ENCODE measurements at regions of chr21 and their contacts with region 1.

Region 1: DNA sequence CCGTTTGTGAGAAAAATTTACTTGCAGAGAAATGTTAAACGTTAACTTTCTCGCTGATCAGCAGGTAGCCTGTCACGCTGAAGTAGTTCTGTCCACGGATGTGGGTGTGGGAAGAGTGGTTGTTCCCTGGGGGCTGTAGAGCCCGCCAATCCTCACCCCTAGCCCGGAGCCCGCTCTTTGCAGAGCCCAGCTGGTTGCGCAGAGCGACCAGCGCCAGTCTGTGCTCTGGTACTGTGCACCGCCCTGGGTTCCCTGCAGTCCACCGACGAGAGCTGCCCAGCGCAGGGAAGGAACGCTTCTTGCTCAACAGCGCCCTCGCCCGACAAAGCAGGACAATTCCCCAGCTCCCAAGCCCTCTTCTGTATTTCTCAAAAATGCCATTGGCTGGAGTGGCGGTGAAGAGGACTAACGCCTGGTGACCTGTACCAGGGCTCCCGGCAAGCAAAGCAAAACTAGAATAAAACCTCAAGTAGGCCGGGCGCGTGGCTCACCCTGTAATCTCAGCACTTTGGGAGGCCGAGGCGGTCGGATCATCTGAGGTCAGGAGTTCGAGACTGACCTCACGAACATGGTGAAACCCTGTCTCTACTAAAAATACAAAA is 3.3 kb downstream of the RIPPLY3 start:
- DNase-seq: peak; percentile 65 to 73 (median 68)
- H3K4me3 ChIP-seq: no peak overlapping the region
- H3K4me3 Mint-ChIP-seq: peak overlapping the region; percentile 40 to 87 (median 64)
- H3K27ac ChIP-seq: no peak overlapping the region
- H3K27ac Mint-ChIP-seq: peak overlapping the region in 1 of 7 donors; percentile 35
- H3K4me1 ChIP-seq: peaks cover 17% of the 10 kb centered on the region
- H3K4me1 Mint-ChIP-seq: peaks cover 8 to 18% (median 12%) of the 10 kb centered on the region in 4 donors
- H3K27me3 ChIP-seq: no peaks in the 10 kb centered on the region
- H3K27me3 Mint-ChIP-seq: peaks cover 24 to 33% of the 10 kb centered on the region in 2 donors

Region 2: DNA sequence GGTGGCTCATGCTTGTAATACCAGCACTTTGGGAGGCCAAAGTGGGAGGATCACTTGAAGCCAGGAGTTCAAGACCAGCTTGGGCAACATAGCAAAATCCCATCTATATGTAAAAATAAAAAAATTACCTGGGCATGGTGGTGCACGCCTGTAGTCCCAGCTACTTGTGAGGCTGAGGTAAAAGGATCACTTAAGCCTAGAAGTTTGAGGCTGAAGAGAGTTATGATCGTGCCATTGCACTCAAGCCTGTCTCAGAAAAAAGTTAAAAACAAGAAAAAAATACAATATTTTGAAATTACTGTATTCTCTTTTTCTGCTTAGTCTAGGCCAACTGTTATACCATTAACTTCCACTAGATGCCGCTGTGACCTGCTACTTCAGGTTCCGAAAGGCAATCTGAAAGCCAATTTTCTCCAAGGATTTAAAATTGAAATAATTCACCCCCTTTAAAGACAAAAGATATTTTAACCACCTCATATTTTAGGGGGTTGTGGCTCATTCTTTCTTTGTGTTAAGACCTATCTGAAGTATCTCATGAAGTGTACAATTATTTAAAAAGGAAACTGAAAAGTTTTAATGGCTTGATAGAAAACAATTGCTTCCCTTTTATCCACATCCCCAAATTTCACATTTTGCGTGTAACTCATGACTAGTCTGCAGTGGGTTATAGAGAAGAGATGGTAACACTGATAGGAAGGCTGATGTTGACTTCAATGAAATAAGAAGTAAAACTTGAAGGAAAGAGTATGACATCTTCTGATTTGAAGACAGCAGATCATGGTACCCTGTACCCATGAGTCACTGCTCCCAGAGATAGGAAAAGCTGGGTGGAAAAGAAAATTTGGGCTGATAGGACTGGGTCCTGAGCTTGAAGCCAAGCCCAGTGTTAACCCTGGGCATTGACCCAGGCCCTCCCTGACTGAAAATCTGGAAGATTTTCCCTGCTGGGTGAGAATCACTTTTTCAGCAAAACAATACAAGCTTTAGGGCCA is 505.5 kb before region 1 on chr21:
- CTCF ChIA-PET with region 1: no interaction called
- POLR2A ChIA-PET with region 1: no interaction called
- intact Hi-C with region 1: loop called (anchors 2 kb)
- DNase-seq: peak in 4 of 5 donors; percentile 19 to 42 (median 28)
- H3K4me3 ChIP-seq: no peak overlapping the region
- H3K4me3 Mint-ChIP-seq: no peak overlapping the region
- H3K27ac ChIP-seq: no peak overlapping the region
- H3K27ac Mint-ChIP-seq: no peak overlapping the region
- H3K4me1 ChIP-seq: no peaks in the 10 kb centered on the region
- H3K4me1 Mint-ChIP-seq: no peaks in the 10 kb centered on the region
- H3K27me3 ChIP-seq: peaks cover 10% of the 10 kb centered on the region
- H3K27me3 Mint-ChIP-seq: peaks cover 11 to 14% of the 10 kb centered on the region in 2 donors

Region 3: DNA sequence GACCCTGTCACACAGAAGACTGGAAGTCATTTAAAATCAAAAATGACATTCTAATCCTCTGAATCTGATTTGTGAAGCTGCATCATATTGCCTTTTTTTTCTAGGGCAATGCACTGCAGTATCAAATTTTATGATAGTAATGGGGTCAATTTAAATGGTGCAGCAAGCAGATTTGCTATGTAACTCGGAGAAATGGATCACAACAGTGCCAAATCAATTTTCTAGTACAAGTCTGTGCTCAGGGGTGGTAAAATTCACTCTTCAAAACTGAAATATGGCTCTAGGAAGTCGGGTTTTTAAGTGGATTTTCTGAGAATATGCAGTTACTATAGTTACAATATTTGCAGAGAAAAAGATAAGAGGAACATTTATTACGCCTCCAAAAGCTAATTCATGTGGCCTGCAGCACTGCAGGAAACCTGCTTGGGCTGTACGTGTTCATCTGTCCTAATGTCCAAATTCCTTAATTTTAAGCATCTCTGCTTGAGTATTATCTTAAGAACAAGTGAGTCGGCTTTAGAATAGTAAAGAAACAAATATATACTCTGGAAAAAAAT is 74.9 kb before region 1 on chr21:
- CTCF ChIA-PET with region 1: interaction called, 7 read pairs
- POLR2A ChIA-PET with region 1: no interaction called
- intact Hi-C with region 1: loop called (anchors 1 kb)
- DNase-seq: no peak
- H3K4me3 ChIP-seq: no peak overlapping the region
- H3K4me3 Mint-ChIP-seq: no peak overlapping the region
- H3K27ac ChIP-seq: no peak overlapping the region
- H3K27ac Mint-ChIP-seq: no peak overlapping the region
- H3K4me1 ChIP-seq: no peaks in the 10 kb centered on the region
- H3K4me1 Mint-ChIP-seq: no peaks in the 10 kb centered on the region
- H3K27me3 ChIP-seq: no peaks in the 10 kb centered on the region
- H3K27me3 Mint-ChIP-seq: no peaks in the 10 kb centered on the region

Region 4: GRCh38 chr21:36976882-36977651 is 32.8 kb before region 1 on chr21:
- CTCF ChIA-PET with region 1: interaction called, 29 read pairs
- POLR2A ChIA-PET with region 1: interaction called, 4 read pairs
- intact Hi-C with region 1: loop called (anchors 1 kb)
- DNase-seq: peak in 4 of 5 donors; percentile 31 to 69 (median 54)
- H3K4me3 ChIP-seq: no peak overlapping the region
- H3K4me3 Mint-ChIP-seq: peak overlapping the region in 3 of 8 donors; percentile 12 to 46 (median 43)
- H3K27ac ChIP-seq: no peak overlapping the region
- H3K27ac Mint-ChIP-seq: peak overlapping the region in 6 of 7 donors; percentile 24 to 81 (median 74)
- H3K4me1 ChIP-seq: no peaks in the 10 kb centered on the region
- H3K4me1 Mint-ChIP-seq: peaks cover 5 to 22% (median 15%) of the 10 kb centered on the region in 4 donors
- H3K27me3 ChIP-seq: no peaks in the 10 kb centered on the region
- H3K27me3 Mint-ChIP-seq: peaks cover 2 to 8% of the 10 kb centered on the region in 2 donors

Region 5: GRCh38 chr21:37026499-37026898 is 16.7 kb after region 1 on chr21:
- CTCF ChIA-PET with region 1: interaction called, 23 read pairs
- POLR2A ChIA-PET with region 1: no interaction called
- intact Hi-C with region 1: no loop called
- DNase-seq: no peak
- H3K4me3 ChIP-seq: no peak overlapping the region
- H3K4me3 Mint-ChIP-seq: no peak overlapping the region
- H3K27ac ChIP-seq: no peak overlapping the region
- H3K27ac Mint-ChIP-seq: no peak overlapping the region
- H3K4me1 ChIP-seq: no peaks in the 10 kb centered on the region
- H3K4me1 Mint-ChIP-seq: no peaks in the 10 kb centered on the region
- H3K27me3 ChIP-seq: no peaks in the 10 kb centered on the region
- H3K27me3 Mint-ChIP-seq: peaks cover 1 to 3% of the 10 kb centered on the region in 2 donors

Region 6: DNA sequence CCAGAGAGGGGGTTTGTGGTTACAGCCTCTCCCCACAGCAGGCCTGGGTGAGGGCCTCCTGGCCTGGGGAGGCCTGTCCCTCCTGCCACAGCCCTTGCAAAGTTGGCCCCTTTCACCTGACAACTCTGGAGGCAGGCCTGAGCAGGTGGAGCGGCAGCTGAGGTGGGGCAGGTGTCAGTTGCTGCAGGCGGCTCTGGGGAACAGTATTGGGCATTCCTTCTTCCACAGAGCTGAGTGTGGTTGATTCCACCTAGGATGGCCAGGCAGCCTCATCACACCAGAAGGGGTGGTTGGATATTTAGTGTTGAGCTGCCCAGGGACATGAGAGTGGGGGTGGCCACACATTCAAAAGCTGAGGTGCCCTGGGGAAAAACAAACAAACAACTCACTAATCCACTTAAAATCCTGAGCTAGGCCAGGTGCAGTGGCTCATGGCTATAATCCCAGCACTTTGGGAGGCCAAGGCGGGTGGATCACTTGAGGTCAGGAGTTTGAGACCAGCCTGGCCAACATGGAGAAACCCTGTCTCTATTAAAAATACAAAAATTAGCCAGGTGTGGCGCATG is 31.9 kb after region 1 on chr21:
- CTCF ChIA-PET with region 1: no interaction called
- POLR2A ChIA-PET with region 1: no interaction called
- intact Hi-C with region 1: no loop called
- DNase-seq: no peak
- H3K4me3 ChIP-seq: no peak overlapping the region
- H3K4me3 Mint-ChIP-seq: no peak overlapping the region
- H3K27ac ChIP-seq: no peak overlapping the region
- H3K27ac Mint-ChIP-seq: no peak overlapping the region
- H3K4me1 ChIP-seq: peaks cover 6% of the 10 kb centered on the region
- H3K4me1 Mint-ChIP-seq: peaks cover 6 to 11% (median 8%) of the 10 kb centered on the region in 4 donors
- H3K27me3 ChIP-seq: no peaks in the 10 kb centered on the region
- H3K27me3 Mint-ChIP-seq: peaks cover 2% of the 10 kb centered on the region in 2 donors

Region 7: GRCh38 chr21:37849506-37850102 is 839.8 kb after region 1 on chr21:
- CTCF ChIA-PET with region 1: no interaction called
- POLR2A ChIA-PET with region 1: no interaction called
- intact Hi-C with region 1: no loop called
- DNase-seq: no peak
- H3K4me3 ChIP-seq: no peak overlapping the region
- H3K4me3 Mint-ChIP-seq: no peak overlapping the region
- H3K27ac ChIP-seq: no peak overlapping the region
- H3K27ac Mint-ChIP-seq: peak overlapping the region in 1 of 7 donors; percentile 72
- H3K4me1 ChIP-seq: no peaks in the 10 kb centered on the region
- H3K4me1 Mint-ChIP-seq: no peaks in the 10 kb centered on the region
- H3K27me3 ChIP-seq: no peaks in the 10 kb centered on the region
- H3K27me3 Mint-ChIP-seq: peaks cover 13 to 15% of the 10 kb centered on the region in 2 donors

Measured in CD4-positive, alpha-beta memory T cell (primary cell).